ENCODE measurements at regions of chr12 and their contacts with region 1.

Region 1: GRCh38 chr12:55973598-55974307 is at the start of gene RAB5B:
- DNase-seq: peak; percentile 98 to 100
- H3K4me3 ChIP-seq: peak within 1 kb of the TSS; percentile 93
- H3K27ac ChIP-seq: peak within 1 kb of the TSS; percentile 86
- H3K4me1 ChIP-seq: peaks cover 27% of the 10 kb centered on the region
- H3K27me3 ChIP-seq: no peaks in the 10 kb centered on the region
- CTCF ChIP-seq: peak; percentile 70
- total RNA-seq, gene RAB5B: 98.6 and 122 TPM in 2 replicates

Region 2: DNA sequence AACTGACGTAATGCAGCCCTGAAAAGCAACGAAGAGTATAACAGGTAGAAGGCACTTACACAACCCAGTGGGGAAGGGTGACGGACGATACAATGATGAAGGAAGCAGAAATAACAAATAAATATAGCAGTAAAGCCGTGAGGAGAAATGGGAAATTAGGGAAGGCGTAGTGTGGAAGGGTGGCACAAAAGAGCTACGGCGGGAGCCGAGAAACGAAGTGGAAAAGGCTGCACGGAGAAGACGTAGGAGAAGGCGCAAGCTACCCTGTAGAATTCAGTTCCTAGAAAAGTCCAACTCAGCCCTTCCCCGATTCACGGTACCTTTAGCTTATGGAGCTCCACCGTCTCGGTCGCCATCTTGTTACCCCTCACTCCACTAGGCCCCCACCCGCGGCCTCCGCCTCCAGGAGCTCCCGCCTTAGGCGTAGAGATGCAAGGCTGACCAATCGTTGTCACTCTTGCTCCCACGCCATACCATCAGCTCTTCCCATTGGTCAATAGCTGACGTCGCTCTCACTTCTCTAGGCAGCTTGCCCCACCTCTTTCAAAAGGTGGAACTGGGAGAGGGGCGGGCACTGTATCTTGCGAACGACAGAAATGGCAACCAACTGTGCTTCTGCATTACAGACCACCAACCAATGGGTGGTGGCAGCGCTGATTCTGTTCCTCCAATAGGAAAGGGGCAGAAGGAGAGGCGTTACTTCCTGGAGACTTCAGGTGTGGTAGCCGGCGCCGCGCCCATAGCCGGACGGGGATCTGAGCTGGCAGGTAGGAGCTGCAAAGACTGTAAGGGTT is 156.2 kb before region 1 on chr12 and contains the starts of genes ORMDL2 and SARNP:
- CTCF ChIA-PET with region 1: interaction called, 7 read pairs
- POLR2A ChIA-PET with region 1: interaction called, 13 read pairs
- intact Hi-C with region 1: loop called (anchors 1 kb)
- DNase-seq: peak; percentile 96 to 99
- H3K4me3 ChIP-seq: peak within 1 kb of the TSS; percentile 72
- H3K27ac ChIP-seq: peak within 1 kb of the TSS; percentile 51
- H3K4me1 ChIP-seq: peaks cover 18% of the 10 kb centered on the region
- H3K27me3 ChIP-seq: no peaks in the 10 kb centered on the region
- CTCF ChIP-seq: no peak
- total RNA-seq, gene ORMDL2: 22.5 and 22.9 TPM in 2 replicates
- total RNA-seq, gene SARNP: 65.6 and 74.8 TPM in 2 replicates

Region 3: DNA sequence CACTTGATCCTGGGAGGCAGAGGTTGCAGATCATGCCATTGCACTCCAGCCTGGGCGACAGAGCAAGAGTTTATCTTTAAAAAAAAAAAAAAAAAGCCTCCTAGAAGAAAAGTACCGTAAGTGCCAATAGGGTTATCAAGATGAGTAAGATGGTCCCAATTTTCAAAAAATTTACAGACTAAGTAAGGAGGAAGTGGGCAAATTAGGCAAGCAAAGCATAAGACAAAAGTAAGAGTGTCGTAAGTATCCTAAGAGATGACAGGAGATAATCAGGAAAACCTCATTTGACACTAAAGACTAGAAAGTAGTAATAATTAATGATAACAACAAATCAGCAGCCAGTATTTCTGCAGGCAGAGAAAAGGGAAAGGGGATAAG is 58.3 kb before region 1 on chr12:
- CTCF ChIA-PET with region 1: no interaction called
- POLR2A ChIA-PET with region 1: no interaction called
- intact Hi-C with region 1: no loop called
- DNase-seq: no peak
- H3K4me3 ChIP-seq: no peak overlapping the region
- H3K27ac ChIP-seq: no peak overlapping the region
- H3K4me1 ChIP-seq: peaks cover 14% of the 10 kb centered on the region
- H3K27me3 ChIP-seq: no peaks in the 10 kb centered on the region
- CTCF ChIP-seq: no peak

Region 4: DNA sequence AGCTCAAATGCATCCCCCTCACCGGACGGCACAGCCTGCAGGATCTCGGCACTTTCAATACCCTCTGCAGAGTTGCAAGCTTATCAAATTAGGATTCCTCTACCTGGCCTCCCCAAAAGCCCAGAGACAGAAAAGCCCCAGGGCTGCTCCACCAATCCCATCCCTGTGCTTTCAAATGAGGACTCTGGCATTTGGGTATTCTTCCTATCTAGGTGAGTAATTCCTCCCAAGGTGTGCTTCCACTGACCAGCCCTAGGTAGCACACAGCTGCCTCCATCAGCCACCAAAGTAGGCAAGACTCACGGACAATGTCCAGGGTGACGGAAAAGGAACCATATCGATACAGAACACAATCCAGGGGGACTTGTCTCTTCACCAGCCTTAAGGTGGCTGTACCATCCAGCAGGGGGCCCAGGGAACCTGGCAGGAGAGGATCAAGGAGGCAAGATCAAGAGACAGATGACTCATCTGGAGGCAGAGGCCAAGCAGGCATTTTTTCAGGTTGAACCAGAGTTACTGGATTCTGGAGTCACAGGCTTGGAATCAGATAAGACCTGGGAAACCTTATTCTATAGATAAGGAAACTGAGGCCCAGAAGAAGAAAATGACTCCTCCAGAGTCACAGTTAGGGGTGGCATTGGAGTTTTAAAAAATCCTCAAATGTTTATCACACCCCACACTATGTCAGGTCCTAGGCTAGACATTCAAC is 17.8 kb before region 1 on chr12:
- CTCF ChIA-PET with region 1: interaction called, 3 read pairs
- POLR2A ChIA-PET with region 1: interaction called, 5 read pairs
- intact Hi-C with region 1: loop called (anchors 1 kb)
- DNase-seq: peak; percentile 84 to 93
- H3K4me3 ChIP-seq: no peak overlapping the region
- H3K27ac ChIP-seq: peak overlapping the region; percentile 58
- H3K4me1 ChIP-seq: peaks cover 43% of the 10 kb centered on the region
- H3K27me3 ChIP-seq: no peaks in the 10 kb centered on the region
- CTCF ChIP-seq: peak; percentile 81

Region 5: DNA sequence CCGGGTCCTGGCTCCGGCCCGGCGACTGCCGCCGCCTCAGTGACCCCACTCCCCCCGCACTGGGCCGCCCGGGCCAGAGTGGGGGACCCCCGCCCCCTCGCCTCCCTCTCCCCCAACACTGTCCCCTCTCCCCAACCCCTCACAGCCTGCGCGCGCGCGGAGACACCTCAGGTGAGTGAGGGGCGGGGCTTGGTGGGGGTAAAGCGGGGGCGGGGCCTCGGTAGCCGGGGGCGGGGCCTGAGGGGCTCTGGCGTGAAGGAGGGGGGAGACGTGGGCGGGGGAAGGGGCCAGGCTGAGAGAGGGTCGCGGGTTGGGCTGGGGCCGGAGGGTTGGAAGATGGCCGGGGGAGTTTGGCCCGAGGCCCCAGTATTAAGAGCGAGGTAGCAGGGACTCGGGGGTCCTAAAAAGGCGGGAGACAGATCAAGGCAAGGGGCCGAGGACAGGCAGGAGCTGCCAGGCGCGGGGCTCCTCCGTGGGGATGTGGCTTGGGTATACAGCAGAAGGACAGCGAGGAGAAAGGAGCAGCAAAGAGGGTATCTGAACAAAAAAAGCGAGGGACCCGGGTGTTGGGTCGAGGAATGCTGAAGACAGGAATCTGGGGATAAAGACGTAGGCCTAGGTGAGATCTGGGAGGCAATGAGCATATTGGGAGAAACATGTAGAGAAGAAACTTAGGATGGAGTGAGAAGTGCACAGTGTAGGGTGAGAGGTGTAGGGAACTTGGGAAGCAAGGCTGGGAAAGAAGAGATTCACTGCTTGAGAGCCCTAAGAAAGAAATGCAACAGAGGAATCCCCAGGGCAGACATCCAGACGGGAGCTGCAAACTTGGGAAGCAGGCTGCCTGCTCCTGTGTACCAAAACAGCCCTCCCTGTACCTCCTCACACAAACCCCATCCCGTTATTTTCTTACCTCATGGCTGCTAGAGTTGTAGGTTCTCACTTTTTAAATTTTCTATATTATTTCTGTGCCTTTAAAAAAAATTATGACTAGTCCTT is 34.1 kb after region 1 on chr12:
- CTCF ChIA-PET with region 1: no interaction called
- POLR2A ChIA-PET with region 1: no interaction called
- intact Hi-C with region 1: no loop called
- DNase-seq: peak in 1 of 2 experiments; percentile 65
- H3K4me3 ChIP-seq: peak overlapping the region; percentile 63
- H3K27ac ChIP-seq: peak overlapping the region; percentile 52; the same call in 1 of the 2 replicates
- H3K4me1 ChIP-seq: peaks cover 13% of the 10 kb centered on the region
- H3K27me3 ChIP-seq: no peaks in the 10 kb centered on the region
- CTCF ChIP-seq: no peak

Region 6: GRCh38 chr12:56521590-56522371 is 548.0 kb after region 1 on chr12 and contains the start of gene RBMS2:
- CTCF ChIA-PET with region 1: interaction called, 17 read pairs
- POLR2A ChIA-PET with region 1: no interaction called
- intact Hi-C with region 1: no loop called
- DNase-seq: peak; percentile 76 to 82
- H3K4me3 ChIP-seq: peak within 1 kb of the TSS; percentile 80
- H3K27ac ChIP-seq: peak within 1 kb of the TSS; percentile 95
- H3K4me1 ChIP-seq: peaks cover 76% of the 10 kb centered on the region
- H3K27me3 ChIP-seq: no peaks in the 10 kb centered on the region
- CTCF ChIP-seq: no peak
- total RNA-seq, gene RBMS2: 44.7 and 81.8 TPM in 2 replicates

Measured in PC-9 (cell line).